Posterior cingulate gyrus (tissue), 11 donors: ENCODE measurements at regions of chr10 and their contacts with region 1.

Region 1: DNA sequence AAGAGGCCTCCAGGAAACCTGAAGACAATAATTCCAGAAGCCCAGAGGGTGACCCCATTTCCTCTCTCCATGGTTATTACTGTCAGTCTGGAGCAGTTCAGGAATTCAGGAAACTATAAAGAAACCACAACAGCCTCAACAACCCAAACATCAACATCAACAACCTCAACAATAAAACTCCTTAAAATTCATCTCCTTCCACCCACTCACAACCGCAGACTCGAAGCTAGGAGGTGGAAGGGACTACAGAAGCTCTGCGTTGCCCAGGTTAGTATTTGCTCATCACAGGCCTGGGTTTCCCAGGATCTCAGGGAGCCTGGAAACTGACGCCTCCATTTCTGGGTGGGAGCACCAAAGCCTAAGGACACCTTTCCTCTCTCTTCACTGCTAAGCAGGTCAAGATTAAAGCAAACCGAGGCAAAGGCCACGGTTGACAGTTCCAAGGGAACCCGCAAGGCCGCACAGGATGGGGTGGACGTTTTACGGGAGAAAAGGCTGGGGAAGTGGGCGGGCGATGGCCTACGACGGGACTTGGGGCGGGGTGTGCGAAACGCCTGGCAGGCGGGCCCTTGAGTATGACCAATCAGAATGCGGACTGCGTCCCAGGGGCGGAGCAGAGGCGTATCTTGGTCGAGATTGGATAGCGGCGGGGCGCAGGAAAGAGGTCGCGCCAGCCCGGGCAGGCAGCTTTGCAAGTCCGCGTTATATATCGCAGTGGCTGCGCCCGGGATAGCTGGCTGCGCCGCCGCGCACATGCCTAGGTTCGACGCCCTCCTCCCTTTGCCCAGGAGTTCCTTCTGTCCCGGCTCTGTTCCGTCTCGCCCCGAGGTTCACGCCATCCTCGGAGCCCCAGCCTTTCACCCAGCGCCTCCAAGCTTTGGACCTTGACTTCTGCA is at the start of gene ELOVL3:
- DNase-seq: peak; percentile 83 to 99 (median 90)

Region 2: DNA sequence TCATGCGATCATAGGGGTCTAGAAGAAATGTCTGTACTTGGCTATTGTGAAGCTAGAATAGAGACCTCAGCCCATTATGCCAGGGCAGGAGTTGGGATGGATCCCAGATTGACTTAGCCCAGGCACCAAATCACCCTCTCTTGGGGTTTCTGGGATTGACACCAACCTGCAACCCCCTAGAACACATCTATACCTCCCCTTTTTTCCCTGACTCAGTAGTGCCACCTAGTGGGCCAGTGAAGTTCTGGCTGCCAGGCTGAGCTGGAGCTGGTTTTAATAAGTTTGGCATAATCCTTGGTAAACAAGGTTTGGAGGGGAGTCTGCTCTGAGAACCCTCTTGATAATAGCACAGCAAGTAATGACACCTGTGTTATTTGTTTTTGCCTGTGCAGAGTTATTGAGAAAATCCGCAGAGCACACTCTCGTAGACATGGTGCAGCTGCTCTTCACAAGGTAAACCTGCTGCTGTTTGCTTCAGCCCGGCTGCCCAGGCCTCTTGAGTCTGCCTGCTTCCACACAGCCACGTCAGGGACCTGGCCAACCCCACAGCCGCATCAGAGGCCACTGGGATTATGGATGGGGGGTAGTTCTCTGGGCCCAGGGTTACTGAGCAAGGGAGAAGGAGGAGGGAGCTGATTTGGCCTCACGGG is 126.3 kb after region 1 on chr10:
- intact Hi-C with region 1: loop called (anchors 1 kb)
- DNase-seq: peak in 6 of 10 donors; percentile 39 to 70 (median 60)

Region 3: DNA sequence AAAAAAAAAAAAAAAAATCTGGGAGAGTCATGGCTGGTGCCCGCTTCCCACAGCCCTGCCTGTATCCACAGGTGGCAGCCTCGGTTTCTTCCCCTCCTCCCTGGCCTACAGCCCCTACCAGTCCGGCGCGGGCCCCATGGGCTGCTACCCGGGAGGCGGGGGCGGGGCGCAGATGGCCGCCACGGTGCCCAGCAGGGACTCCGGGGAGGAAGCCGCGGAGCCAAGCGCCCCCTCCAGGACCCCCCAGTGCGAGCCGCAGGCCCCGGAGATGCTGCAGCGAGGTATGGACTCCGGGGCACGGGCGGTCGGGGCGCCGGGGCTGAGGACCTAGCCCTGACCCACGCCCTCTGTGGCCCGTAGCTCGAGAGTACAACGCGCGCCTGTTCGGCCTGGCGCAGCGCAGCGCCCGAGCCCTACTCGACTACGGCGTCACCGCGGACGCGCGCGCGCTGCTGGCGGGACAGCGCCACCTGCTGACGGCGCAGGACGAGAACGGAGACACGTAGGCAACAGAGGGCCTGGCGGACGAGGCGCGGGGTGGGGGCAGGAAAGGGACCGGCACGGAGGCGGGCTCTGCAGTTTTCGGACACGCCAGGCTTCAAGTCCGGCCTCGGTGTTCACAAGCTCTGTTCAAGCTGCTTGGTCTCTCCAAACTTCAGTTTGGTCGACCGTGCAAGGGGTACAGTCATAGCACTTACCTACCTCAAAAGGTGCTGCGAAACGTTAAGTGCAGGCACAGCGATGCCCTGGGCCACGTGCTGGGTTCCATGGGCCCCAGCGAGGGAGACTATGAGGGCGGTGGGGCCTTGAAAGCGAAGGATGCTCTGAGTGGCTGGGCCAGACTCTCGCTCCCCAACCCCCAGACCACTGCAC is 173.6 kb after region 1 on chr10:
- intact Hi-C with region 1: loop called (anchors 5 kb)
- DNase-seq: peak; percentile 81 to 99 (median 90)